ENCODE measurements at regions of chr6 and their contacts with region 1.

Region 1: GRCh38 chr6:140915103-140915502 is 1217.6 kb upstream of the GJE1 start:
- DNase-seq: no peak

Region 2: GRCh38 chr6:140732155-140732554 is 182.9 kb before region 1 on chr6:
- intact Hi-C with region 1: no loop called
- DNase-seq: no peak

Region 3: DNA sequence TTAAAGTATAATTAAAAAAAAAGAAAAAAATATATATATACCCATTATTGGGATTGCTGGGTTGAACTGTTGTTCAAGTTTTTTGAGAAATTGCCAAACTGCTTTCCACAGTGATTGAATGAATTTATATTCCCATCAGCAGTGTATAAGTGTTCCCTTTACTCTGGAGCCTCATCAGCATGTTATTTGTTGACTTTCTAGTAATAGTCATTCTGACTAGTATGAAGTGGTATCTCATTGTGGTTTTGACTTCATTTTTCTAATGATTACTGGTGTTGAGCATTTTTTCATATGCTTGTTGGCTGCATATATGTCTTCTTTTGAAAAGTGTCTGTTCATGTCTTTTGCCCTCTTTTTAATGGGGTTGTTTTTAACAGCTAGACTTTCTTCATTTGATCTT is 43.2 kb before region 1 on chr6:
- intact Hi-C with region 1: no loop called
- DNase-seq: no peak

Region 4: GRCh38 chr6:140979642-140980091 is 64.6 kb after region 1 on chr6:
- intact Hi-C with region 1: no loop called
- DNase-seq: no peak

Region 5: GRCh38 chr6:141562851-141563763 is 648.0 kb after region 1 on chr6:
- intact Hi-C with region 1: loop called (anchors 10 kb)
- DNase-seq: no peak